ENCODE measurements at regions of chr2 and their contacts with region 1.

Region 1: DNA sequence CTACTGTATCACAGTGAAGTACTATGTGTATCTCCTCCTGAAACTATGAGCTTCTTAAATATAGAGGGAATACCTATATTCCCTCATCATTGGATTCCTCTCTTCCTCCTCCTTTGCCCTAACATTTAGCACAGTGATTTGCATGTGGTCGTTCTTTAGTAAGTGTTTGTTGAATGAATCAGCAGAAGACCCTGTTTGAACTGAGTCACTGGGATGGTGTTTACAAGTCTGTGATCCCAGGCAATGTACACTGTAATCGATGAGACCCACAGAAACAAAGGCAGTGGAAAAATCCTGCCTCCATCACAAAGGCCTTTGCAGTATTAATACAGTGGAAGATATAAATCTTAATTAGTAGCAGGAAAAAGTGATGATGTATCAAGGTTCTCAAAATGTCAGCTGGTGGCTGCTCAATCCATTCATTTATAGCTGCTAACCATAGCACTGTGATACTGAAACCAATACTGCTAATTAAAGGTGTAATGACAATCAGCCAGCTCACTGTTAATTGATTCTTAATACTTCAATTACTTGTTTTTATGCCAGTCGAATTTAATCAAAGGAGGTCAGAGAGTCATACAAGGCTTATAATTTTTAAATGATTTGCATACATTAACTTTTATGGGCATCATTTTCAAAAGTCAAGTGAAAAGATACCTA is 20.8 kb upstream of the MYO3B start:
- DNase-seq: peak in 1 of 2 experiments; percentile 83
- H3K4me3 ChIP-seq: no peak overlapping the region
- H3K27ac ChIP-seq: peak overlapping the region; percentile 40
- H3K4me1 ChIP-seq: peaks cover 28% of the 10 kb centered on the region
- H3K27me3 ChIP-seq: no peaks in the 10 kb centered on the region
- CTCF ChIP-seq: no peak

Region 2: GRCh38 chr2:170228429-170228828 is 71.3 kb after region 1 on chr2:
- CTCF ChIA-PET with region 1: no interaction called
- POLR2A ChIA-PET with region 1: interaction called, 14 read pairs
- intact Hi-C with region 1: no loop called
- DNase-seq: no peak
- H3K4me3 ChIP-seq: no peak overlapping the region
- H3K27ac ChIP-seq: no peak overlapping the region
- H3K4me1 ChIP-seq: 0 out of 2 replicates have a peak, but pooled peaks cover 4% of the 10 kb centered on the region
- H3K27me3 ChIP-seq: no peaks in the 10 kb centered on the region
- CTCF ChIP-seq: no peak

Measured in PC-9 (cell line).